ENCODE measurements at regions of chr6 and their contacts with region 1.

Region 1: GRCh38 chr6:106223300-106223930 is 102.1 kb downstream of the ATG5 start:
- DNase-seq: peak in 3 of 5 donors; percentile 35 to 60 (median 51)
- ATAC-seq: peak in 3 of 4 donors; percentile 61 to 73 (median 71)
- H3K4me3 ChIP-seq: no peak overlapping the region
- H3K27ac ChIP-seq: no peak overlapping the region
- H3K4me1 ChIP-seq: peaks cover 0 to 7% (median 0%) of the 10 kb centered on the region in 12 donors
- H3K27me3 ChIP-seq: no peaks in the 10 kb centered on the region
- CTCF ChIP-seq: peak; percentile 44 to 75 (median 66)
- POLR2A ChIP-seq: no peak

Region 2: GRCh38 chr6:105726907-105727655 is 496.3 kb before region 1 on chr6:
- intact Hi-C with region 1: loop called in 5 of 10 experiments (anchors 5 to 10 kb)
- DNase-seq: no peak
- ATAC-seq: no peak
- H3K4me3 ChIP-seq: no peak overlapping the region
- H3K27ac ChIP-seq: no peak overlapping the region
- H3K4me1 ChIP-seq: peaks cover 0 to 4% (median 0%) of the 10 kb centered on the region in 12 donors
- H3K27me3 ChIP-seq: no peaks in the 10 kb centered on the region
- CTCF ChIP-seq: no peak
- POLR2A ChIP-seq: no peak

Region 3: GRCh38 chr6:105739764-105740163 is 483.7 kb before region 1 on chr6:
- intact Hi-C with region 1: loop called in 6 of 10 experiments (anchors 5 to 10 kb)
- DNase-seq: no peak
- ATAC-seq: no peak
- H3K4me3 ChIP-seq: no peak overlapping the region
- H3K27ac ChIP-seq: no peak overlapping the region
- H3K4me1 ChIP-seq: peaks cover 0 to 7% (median 0%) of the 10 kb centered on the region in 12 donors
- H3K27me3 ChIP-seq: no peaks in the 10 kb centered on the region
- CTCF ChIP-seq: no peak
- POLR2A ChIP-seq: no peak

Region 4: DNA sequence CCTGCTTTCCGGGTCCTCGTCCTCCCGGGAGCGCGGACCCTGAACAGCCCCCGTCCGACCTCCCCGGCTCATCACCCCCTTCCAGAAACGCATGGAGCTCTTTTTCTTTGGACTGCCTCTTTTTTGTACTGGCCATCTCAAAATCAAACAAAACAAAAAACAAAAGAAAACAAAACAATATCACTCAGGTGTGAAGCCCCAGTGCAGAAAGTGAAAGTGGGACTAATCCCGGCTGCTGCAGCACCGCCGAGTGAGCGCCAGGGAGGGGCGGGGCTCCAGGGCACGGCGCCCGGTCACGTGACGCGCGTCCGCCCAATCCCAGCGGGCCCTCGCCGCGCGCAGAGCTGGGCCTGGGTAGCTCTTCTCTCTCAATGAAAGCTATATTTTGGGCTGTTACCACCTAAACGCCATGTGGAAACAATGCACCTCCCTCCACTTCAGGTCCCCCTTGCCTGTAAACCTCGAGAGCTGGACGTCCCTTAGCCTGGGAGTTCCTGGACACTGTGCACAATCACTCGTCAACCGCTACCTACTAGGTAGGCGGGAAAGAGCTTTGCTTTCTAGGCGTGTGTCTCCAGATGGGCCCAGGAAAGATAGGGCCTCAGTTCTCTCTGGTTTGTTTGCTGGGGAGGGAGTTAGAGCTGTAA is 231.0 kb before region 1 on chr6:
- intact Hi-C with region 1: loop called in 2 of 10 experiments (anchors 10 kb)
- DNase-seq: peak; percentile 76 to 92 (median 84)
- ATAC-seq: peak; percentile 83 to 95 (median 95)
- H3K4me3 ChIP-seq: peak overlapping the region; percentile 53 to 78 (median 62)
- H3K27ac ChIP-seq: peak overlapping the region in 6 of 12 donors; percentile 24 to 96 (median 54)
- H3K4me1 ChIP-seq: peaks cover 0 to 37% (median 15%) of the 10 kb centered on the region in 12 donors
- H3K27me3 ChIP-seq: peaks cover 26 to 100% (median 84%) of the 10 kb centered on the region in 9 donors
- CTCF ChIP-seq: no peak
- POLR2A ChIP-seq: peak in 1 of 2 donors; percentile 22

Region 5: GRCh38 chr6:106097411-106098231 is 125.8 kb before region 1 on chr6:
- intact Hi-C with region 1: loop called in 1 of 10 experiments (anchors 10 kb)
- DNase-seq: no peak
- ATAC-seq: peak; percentile 31 to 63 (median 57)
- H3K4me3 ChIP-seq: peak overlapping the region; percentile 3 to 63 (median 46)
- H3K27ac ChIP-seq: peak overlapping the region; percentile 59 to 96 (median 75)
- H3K4me1 ChIP-seq: peaks cover 0 to 50% (median 2%) of the 10 kb centered on the region in 12 donors
- H3K27me3 ChIP-seq: peaks cover 0 to 59% (median 0%) of the 10 kb centered on the region in 9 donors
- CTCF ChIP-seq: no peak
- POLR2A ChIP-seq: no peak

Measured in heart left ventricle (tissue), 16 donors.